Activated CD4-positive, alpha-beta T cell treated with anti-CD3 and anti-CD28 coated beads, Interleukin-2, amount 10 ng/mL, durations not matched to agents 7 days and 5 days (primary cell): ENCODE measurements at regions of chr10 and their contacts with region 1.

Region 1: DNA sequence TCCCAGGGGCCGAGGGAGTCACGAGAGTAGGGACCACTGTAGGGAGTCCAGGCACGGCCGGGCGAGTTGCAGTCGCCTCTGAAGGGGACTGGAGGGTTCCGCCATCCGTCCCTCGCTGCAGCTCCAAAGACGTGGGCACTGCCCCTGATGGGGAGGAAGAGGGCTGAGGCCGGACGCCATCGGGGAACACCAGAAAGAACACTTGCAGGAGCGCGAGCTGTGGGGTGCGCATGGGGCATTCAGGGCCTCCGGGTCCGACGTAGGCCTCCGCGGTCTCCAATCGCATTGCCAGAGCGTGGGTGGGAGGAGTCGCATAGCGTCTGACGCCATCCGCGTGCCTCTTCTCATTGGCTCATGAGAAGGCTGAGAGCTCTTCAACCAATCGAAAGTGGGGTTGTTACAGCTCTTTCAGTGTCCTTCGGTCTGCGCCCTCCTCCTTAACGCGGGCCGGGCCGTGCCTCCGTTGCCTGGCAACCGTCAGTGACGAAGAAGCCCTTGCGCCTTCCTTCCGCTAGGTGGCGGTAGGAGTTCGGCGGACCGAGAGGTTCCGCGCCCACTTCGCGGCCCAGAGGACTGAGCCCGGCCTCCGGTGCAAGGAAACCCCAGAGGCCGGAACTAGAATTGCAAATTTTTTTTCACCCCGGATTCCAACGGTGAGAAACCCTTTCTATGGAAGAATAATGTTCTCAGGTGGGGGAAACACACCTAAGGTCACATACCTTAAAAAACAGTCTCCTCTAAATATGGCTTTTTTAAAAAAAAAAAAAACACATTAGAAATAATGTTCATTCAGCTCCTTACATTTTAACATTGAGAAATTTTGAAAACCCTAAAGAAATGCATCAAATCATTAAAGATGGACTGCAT is at the start of gene TCTN3:
- DNase-seq: peak; percentile 97
- H3K4me3 Mint-ChIP-seq: peak within 1 kb of the TSS; percentile 94
- H3K27ac Mint-ChIP-seq: peak within 1 kb of the TSS; percentile 92
- H3K4me1 Mint-ChIP-seq: peaks cover 35% of the 10 kb centered on the region
- H3K27me3 Mint-ChIP-seq: peaks cover 2% of the 10 kb centered on the region
- total RNA-seq, gene TCTN3: 14.3 to 15.6 TPM

Region 2: DNA sequence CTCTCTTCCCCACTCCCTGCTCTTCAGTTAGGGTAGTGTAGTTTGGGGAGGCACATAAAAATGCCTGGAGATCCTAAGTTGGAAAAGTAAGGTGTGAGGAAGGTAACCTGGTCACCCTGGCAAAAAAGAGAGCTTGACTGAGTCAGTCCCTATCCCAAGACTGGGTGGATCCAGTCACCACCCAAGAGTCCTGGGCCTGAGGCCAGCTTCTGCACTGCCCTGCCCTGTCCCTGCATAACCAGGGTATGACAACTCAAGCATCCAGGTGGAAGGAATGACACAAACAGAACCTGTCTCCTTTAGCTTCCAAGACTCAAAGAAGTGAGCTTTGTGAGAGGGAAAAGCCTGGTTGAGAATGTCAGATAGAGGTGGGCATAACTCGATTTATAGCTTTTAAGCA is 105.9 kb before region 1 on chr10:
- CTCF ChIA-PET with region 1: no interaction called
- POLR2A ChIA-PET with region 1: no interaction called
- DNase-seq: no peak
- H3K4me3 Mint-ChIP-seq: no peak overlapping the region
- H3K27ac Mint-ChIP-seq: no peak overlapping the region
- H3K4me1 Mint-ChIP-seq: no peaks in the 10 kb centered on the region
- H3K27me3 Mint-ChIP-seq: peaks cover 5% of the 10 kb centered on the region

Region 3: GRCh38 chr10:95664543-95664942 is 29.4 kb before region 1 on chr10:
- CTCF ChIA-PET with region 1: interaction called, 17 read pairs
- POLR2A ChIA-PET with region 1: no interaction called
- DNase-seq: no peak
- H3K4me3 Mint-ChIP-seq: no peak overlapping the region
- H3K27ac Mint-ChIP-seq: no peak overlapping the region
- H3K4me1 Mint-ChIP-seq: no peaks in the 10 kb centered on the region
- H3K27me3 Mint-ChIP-seq: no peaks in the 10 kb centered on the region

Region 4: GRCh38 chr10:95706986-95707385 is 13.1 kb after region 1 on chr10:
- CTCF ChIA-PET with region 1: interaction called, 18 read pairs
- POLR2A ChIA-PET with region 1: no interaction called
- DNase-seq: no peak
- H3K4me3 Mint-ChIP-seq: no peak overlapping the region
- H3K27ac Mint-ChIP-seq: no peak overlapping the region
- H3K4me1 Mint-ChIP-seq: no peaks in the 10 kb centered on the region
- H3K27me3 Mint-ChIP-seq: no peaks in the 10 kb centered on the region

Region 5: GRCh38 chr10:95841661-95842498 is 148.0 kb after region 1 on chr10:
- CTCF ChIA-PET with region 1: interaction called, 149 read pairs
- POLR2A ChIA-PET with region 1: interaction called, 3 read pairs
- DNase-seq: peak; percentile 56
- H3K4me3 Mint-ChIP-seq: no peak overlapping the region
- H3K27ac Mint-ChIP-seq: no peak overlapping the region
- H3K4me1 Mint-ChIP-seq: peaks cover 5% of the 10 kb centered on the region
- H3K27me3 Mint-ChIP-seq: peaks cover 4% of the 10 kb centered on the region

Region 6: GRCh38 chr10:95872158-95872711 is 178.3 kb after region 1 on chr10:
- CTCF ChIA-PET with region 1: interaction called, 16 read pairs
- POLR2A ChIA-PET with region 1: no interaction called
- DNase-seq: no peak
- H3K4me3 Mint-ChIP-seq: no peak overlapping the region
- H3K27ac Mint-ChIP-seq: no peak overlapping the region
- H3K4me1 Mint-ChIP-seq: peaks cover 13% of the 10 kb centered on the region
- H3K27me3 Mint-ChIP-seq: no peaks in the 10 kb centered on the region